IMR-90 (cell line): ENCODE measurements at regions of chr1 and their contacts with region 1.

Region 1: GRCh38 chr1:108190707-108191411 is 9.3 kb downstream of the SLC25A24 start:
- DNase-seq: no peak
- ATAC-seq: no peak
- H3K4me3 ChIP-seq: no peak overlapping the region
- H3K27ac ChIP-seq: no peak overlapping the region
- H3K4me1 ChIP-seq: no peaks in the 10 kb centered on the region
- H3K27me3 ChIP-seq: no peaks in the 10 kb centered on the region
- CTCF ChIP-seq: no peak
- POLR2A ChIP-seq: no peak
- RAD21 ChIP-seq: no peak

Region 2: GRCh38 chr1:108179018-108179417 is 11.8 kb before region 1 on chr1:
- CTCF ChIA-PET with region 1: interaction called, 5 read pairs
- POLR2A ChIA-PET with region 1: no interaction called
- dilution Hi-C with region 1: no loop called
- in situ Hi-C with region 1: no loop called
- intact Hi-C with region 1: loop called (anchors 1 kb)
- DNase-seq: no peak
- ATAC-seq: no peak
- H3K4me3 ChIP-seq: no peak overlapping the region
- H3K27ac ChIP-seq: no peak overlapping the region
- H3K4me1 ChIP-seq: no peaks in the 10 kb centered on the region
- H3K27me3 ChIP-seq: no peaks in the 10 kb centered on the region
- CTCF ChIP-seq: no peak
- POLR2A ChIP-seq: no peak
- RAD21 ChIP-seq: no peak